Activated T-helper 2 cell treated with anti-CD3 and anti-CD28 coated beads, Interferon-gamma antibody, Interleukin-2, Interleukin-4, amounts not matched to agents 10 μg/mL and 5 μg/mL and 100 μg/mL, durations not matched to agents 14 hours and 24 hours and 36 hours (primary cell): ENCODE measurements at regions of chr1 and their contacts with region 1.

Region 1: DNA sequence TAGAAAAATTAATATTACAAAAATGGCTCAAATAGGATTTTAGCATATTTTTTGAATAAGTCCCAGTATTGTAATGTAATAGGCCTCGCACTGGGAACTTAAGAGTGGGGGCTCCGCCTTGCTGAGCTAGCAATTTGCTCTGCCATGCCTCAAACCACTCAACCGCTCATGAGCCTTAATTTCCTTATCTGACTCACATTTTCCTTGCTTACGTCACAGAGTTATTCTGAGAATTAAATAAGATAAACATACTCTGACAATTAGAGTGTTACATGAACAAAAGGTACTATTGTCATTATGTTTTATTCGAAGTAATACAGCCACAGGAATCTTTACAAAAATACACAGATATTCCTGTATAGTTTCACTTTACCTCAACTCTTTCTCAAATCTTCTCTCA is 108.1 kb downstream of the SLC44A5 start:
- DNase-seq: no peak
- H3K4me3 Mint-ChIP-seq: no peak overlapping the region
- H3K27ac Mint-ChIP-seq: no peak overlapping the region
- H3K4me1 Mint-ChIP-seq: no peaks in the 10 kb centered on the region
- H3K27me3 Mint-ChIP-seq: no peaks in the 10 kb centered on the region

Region 2: DNA sequence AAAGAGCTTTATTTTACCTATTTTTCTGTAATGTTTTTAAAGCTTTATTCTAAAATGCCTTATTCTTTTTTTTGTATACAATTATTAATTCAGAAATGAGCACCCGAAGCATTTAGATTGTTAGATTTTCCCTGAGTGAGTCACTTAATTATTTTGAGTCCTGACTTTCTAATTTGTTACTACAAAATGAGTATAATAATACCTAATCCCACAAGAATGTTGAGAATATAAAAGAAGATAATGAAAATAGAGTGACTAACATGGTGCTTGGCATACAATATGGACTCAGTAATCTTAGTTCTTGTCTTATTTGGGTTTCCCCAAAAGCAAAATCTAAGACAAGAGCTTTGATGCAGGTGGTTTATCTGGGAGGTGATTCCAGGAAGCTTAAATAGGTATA is 226.4 kb before region 1 on chr1:
- intact Hi-C with region 1: no loop called
- DNase-seq: no peak
- H3K4me3 Mint-ChIP-seq: no peak overlapping the region
- H3K27ac Mint-ChIP-seq: no peak overlapping the region
- H3K4me1 Mint-ChIP-seq: no peaks in the 10 kb centered on the region
- H3K27me3 Mint-ChIP-seq: no peaks in the 10 kb centered on the region

Region 3: DNA sequence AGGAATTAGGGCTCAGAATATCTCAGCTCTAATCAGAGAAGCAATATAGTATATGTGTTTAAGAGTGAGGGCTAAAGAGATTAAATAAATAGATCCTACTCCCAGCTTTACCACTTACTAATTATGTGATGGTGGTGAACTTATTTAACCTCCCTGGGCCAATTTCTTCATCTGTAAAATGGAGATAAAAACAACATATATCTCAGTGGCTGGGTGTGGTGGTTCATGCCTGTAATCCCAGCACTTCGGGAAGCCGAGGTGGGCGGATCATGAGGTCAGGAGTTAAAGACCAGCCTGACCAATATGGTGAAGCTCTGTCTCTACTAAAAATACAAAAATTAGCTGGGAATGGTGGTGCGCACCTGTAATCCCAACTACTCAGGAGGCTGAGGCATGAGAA is 27.1 kb before region 1 on chr1:
- intact Hi-C with region 1: loop called (anchors 2 kb)
- DNase-seq: no peak
- H3K4me3 Mint-ChIP-seq: no peak overlapping the region
- H3K27ac Mint-ChIP-seq: no peak overlapping the region
- H3K4me1 Mint-ChIP-seq: no peaks in the 10 kb centered on the region
- H3K27me3 Mint-ChIP-seq: no peaks in the 10 kb centered on the region